Right ventricle myocardium inferior (tissue), 1 donor: ENCODE measurements at regions of chr20 and their contacts with region 1.

Region 1: GRCh38 chr20:48620519-48621254 is 207.1 kb downstream of the PREX1 start:
- DNase-seq: peak; percentile 91
- ATAC-seq: peak; percentile 93

Region 2: DNA sequence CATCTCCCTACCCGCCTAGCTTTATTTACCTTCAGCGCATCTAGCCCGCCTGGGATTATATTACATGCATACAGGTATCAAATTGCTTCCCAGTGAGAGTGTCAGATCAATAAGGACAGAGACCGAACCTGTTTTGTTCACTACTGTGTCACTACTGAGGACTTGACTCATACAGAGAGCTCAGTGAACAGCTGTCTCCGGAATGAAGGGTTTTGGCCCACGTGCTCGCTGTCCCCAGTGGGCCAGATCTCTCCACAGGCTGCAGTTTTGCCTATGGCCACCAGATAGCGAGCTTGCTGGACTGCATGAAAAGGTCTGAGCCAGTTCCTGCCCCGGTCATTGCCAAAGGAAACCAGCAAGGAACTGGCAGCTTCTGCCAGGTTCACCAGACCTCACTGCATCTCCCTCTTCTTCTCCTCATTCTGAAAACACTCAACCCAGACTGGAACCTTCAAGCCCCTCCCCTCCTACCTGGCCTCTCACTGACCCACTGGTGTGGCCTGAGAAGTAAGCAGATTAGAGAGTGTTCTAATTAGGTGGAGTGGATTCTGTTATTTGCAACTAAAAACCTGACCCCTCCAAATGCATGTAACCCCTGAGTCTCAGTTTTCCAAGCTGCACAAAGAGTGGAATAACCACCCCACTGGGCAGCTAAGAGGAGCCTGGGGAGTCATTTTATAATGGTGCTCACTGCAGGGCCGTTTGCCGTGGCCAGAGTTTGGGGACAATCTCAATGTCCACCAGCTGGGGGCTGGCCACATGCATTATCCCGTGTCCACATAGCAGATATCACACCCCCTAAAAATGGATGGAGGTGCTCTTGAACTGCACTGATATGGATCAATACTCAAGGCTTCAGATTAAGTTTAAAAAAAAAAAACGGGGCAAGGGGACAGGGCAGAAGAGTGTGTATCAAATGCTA is 1414.8 kb before region 1 on chr20:
- intact Hi-C with region 1: loop called (anchors 5 kb)
- DNase-seq: peak; percentile 86
- ATAC-seq: peak; percentile 84

Region 3: DNA sequence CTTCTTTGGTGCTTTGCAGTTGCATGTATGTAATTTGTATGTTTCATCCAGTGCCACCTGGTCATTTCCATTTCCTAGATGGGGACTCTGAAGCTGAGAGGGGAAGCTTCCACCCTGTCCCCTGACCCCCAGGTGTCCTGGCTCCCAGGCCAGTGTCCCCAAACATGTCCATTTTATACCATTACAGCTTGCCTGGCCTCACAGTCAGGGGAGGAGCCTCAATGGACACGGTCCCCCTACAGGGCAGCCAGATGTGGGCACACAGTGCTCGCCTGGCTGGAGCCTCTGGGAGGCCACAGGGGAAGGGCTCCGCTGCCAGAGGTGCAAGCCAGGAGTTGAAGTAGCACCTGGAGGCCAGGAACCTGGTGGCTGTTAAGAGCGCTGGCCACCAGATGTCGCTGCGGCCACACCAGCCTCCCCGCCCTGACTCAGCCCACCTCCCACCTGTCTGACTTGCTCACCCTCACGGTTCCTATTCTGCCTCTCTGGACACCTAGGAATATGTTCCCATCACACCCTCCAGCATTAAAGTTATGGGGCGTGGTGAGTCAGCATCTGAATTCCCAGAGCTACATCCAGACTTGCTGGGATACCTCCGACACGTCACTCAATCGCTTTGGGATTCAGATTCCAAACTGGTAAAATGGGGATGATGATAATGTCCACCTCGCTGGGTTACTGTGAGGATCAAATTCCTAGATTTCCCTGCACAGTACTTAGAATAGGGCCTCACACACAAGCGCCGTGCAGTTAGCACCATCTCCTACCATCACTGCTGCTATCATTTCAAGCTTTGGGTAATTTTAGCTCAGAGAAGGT is 942.8 kb before region 1 on chr20:
- intact Hi-C with region 1: loop called (anchors 1 kb)
- DNase-seq: no peak
- ATAC-seq: no peak

Region 4: GRCh38 chr20:47785854-47786764 is 834.6 kb before region 1 on chr20:
- intact Hi-C with region 1: loop called (anchors 1 kb)
- DNase-seq: peak; percentile 80
- ATAC-seq: peak; percentile 90

Region 5: GRCh38 chr20:48421163-48421946 is 199.3 kb before region 1 on chr20:
- intact Hi-C with region 1: loop called (anchors 5 kb)
- DNase-seq: no peak
- ATAC-seq: no peak

Region 6: DNA sequence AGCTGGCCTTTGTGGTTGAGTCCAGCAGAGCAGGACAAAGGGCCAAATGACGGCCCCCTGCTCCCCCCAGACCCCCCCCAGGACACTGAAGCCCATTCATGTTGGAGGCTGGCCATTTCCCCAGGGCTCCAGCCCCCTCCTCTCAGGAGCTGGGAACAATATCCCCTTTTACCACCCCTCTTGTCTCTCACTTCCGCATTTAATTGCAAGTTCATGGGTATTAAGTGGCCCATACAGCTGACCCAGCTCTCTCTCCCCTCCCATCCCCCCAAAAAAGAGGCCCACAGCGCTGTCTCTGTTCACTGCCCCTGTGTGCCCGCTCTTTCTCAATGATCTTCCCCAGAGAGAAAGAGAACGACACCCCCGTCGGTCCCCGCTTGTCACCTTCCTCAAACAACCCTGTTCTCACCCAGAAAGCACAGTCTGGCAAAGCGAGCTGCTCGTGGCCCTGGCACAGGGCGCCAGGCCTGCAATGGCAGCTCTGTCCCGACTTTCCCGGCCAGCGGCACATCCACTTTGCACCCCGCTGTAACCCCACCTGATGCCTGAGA is 176.7 kb after region 1 on chr20:
- intact Hi-C with region 1: no loop called
- DNase-seq: peak; percentile 82
- ATAC-seq: peak; percentile 76